ENCODE measurements at regions of chr20 and their contacts with region 1.

Region 1: GRCh38 chr20:9978397-9979004 is 56.3 kb upstream of the ANKEF1 start:
- DNase-seq: peak; percentile 63 to 94
- ATAC-seq: peak; percentile 94 to 95
- H3K4me3 ChIP-seq: no peak overlapping the region; the same call in 2 of the 3 replicates
- H3K27ac ChIP-seq: peak overlapping the region; percentile 33 to 74
- H3K4me1 ChIP-seq: peaks cover 21% of the 10 kb centered on the region; the same call in 2 of the 3 replicates
- CTCF ChIP-seq: peak; percentile 100
- EP300 ChIP-seq: peak in 1 of 2 experiments; percentile 31; a peak in 1 of 5 replicates
- POLR2A ChIP-seq: no peak
- RAD21 ChIP-seq: peak; percentile 100

Region 2: DNA sequence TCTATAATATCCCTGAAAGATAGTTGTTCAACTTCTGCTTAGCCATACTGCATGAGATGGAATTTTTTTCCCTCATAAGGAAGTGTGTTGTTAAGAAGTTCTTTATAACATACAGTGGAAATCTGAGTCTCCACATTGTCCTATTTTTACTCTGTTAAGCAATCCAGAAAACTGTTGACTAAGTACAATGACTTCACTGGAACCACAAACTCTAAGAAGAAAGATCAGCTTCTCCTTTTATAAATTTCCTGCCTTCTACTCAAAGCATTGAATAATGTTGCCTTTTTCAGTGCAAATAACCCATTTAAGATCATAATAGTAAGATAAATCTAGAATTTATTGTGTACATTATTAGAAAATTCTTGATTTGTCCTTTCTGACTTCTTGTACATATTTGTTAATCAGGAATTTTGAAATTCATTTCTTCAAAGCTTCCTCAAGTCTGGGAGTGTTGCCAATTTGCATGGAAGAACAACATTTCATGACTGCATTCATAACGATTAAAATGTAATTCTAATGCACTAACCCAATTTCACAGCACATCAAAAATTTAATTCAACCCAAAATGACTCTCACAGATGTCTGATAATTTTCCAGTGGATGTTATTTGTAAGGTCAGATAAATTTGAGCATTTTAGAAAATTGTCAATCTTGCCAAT is 10.7 kb after region 1 on chr20:
- CTCF ChIA-PET with region 1: interaction called, 41 read pairs
- POLR2A ChIA-PET with region 1: no interaction called
- DNase-seq: no peak
- ATAC-seq: no peak
- H3K4me3 ChIP-seq: no peak overlapping the region
- H3K27ac ChIP-seq: peak overlapping the region; percentile 21 to 55; a peak in 5 of 6 replicates
- H3K4me1 ChIP-seq: peaks cover 6% of the 10 kb centered on the region; the same call in 1 of the 3 replicates
- CTCF ChIP-seq: no peak
- EP300 ChIP-seq: no peak
- POLR2A ChIP-seq: no peak
- RAD21 ChIP-seq: no peak

Region 3: DNA sequence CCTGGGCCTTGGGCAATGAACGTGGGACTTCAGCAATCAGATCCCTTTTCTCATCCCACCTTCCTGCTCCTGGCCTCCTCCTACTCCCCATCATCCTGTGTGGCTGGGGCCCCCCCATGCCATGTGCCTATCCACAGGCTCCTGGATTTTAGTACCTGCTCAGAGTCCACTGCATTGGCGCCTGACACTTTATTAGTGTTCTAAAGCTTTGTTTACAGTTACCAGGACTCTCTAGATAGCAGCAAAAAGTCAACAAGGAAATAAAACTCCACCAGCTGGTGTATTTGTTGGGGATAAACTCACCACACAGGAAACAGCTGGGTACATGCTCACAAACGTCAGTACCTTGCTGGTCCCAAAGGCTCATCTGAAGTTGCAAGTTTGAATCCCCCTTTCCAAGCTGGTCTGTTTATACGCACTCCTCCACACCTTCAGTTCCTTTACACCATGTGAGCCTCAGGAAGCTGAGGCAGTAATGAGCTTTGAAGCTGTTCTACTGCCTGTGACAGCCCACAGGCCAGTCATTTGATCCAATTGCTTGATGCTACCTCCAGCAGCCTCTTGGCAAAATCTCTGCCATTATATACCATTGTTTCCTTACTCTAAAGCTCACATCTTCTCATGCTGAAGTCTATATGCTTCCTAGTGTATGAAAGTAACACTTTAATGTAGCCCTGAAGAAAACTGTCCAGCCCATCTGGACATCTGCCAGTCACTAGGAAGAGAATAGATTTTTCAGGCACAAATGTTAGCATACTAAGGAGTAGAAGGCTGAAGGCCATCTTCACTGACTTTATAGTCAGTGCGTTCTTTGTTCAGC is 132.8 kb after region 1 on chr20:
- CTCF ChIA-PET with region 1: interaction called, 10 read pairs
- POLR2A ChIA-PET with region 1: no interaction called
- DNase-seq: no peak
- ATAC-seq: peak in 1 of 2 experiments; percentile 54; a peak in 4 of 6 replicates
- H3K4me3 ChIP-seq: no peak overlapping the region
- H3K27ac ChIP-seq: peak overlapping the region in 1 of 2 experiments; percentile 17; a peak in 3 of 6 replicates
- H3K4me1 ChIP-seq: peaks cover 3% of the 10 kb centered on the region; the same call in 1 of the 3 replicates
- CTCF ChIP-seq: no peak
- EP300 ChIP-seq: no peak
- POLR2A ChIP-seq: no peak
- RAD21 ChIP-seq: no peak

Region 4: GRCh38 chr20:10231290-10231689 is 252.8 kb after region 1 on chr20:
- CTCF ChIA-PET with region 1: interaction called, 16 read pairs
- POLR2A ChIA-PET with region 1: no interaction called
- DNase-seq: no peak
- ATAC-seq: no peak
- H3K4me3 ChIP-seq: no peak overlapping the region
- H3K27ac ChIP-seq: no peak overlapping the region
- H3K4me1 ChIP-seq: peaks cover 10% of the 10 kb centered on the region
- CTCF ChIP-seq: no peak
- EP300 ChIP-seq: no peak
- POLR2A ChIP-seq: no peak
- RAD21 ChIP-seq: no peak

Region 5: GRCh38 chr20:10412591-10413408 is 434.3 kb after region 1 on chr20:
- CTCF ChIA-PET with region 1: interaction called, 34 read pairs
- POLR2A ChIA-PET with region 1: no interaction called
- DNase-seq: peak; percentile 43 to 55
- ATAC-seq: peak; percentile 69 to 82; a peak in 5 of 6 replicates
- H3K4me3 ChIP-seq: no peak overlapping the region
- H3K27ac ChIP-seq: peak overlapping the region; percentile 63 to 82
- H3K4me1 ChIP-seq: peaks cover 83% of the 10 kb centered on the region
- CTCF ChIP-seq: peak; percentile 78
- EP300 ChIP-seq: no peak
- POLR2A ChIP-seq: no peak
- RAD21 ChIP-seq: peak; percentile 69 to 76

Region 6: GRCh38 chr20:10536531-10536930 is 558.0 kb after region 1 on chr20:
- CTCF ChIA-PET with region 1: interaction called, 15 read pairs
- POLR2A ChIA-PET with region 1: no interaction called
- DNase-seq: peak in 1 of 2 experiments; percentile 52
- ATAC-seq: peak in 1 of 2 experiments; percentile 37; a peak in 2 of 6 replicates
- H3K4me3 ChIP-seq: no peak overlapping the region
- H3K27ac ChIP-seq: peak overlapping the region; percentile 59 to 92
- H3K4me1 ChIP-seq: peaks cover 54% of the 10 kb centered on the region
- CTCF ChIP-seq: peak; percentile 68
- EP300 ChIP-seq: no peak
- POLR2A ChIP-seq: no peak
- RAD21 ChIP-seq: peak; percentile 76 to 83